PC-9 (cell line): ENCODE measurements at regions of chr13 and their contacts with region 1.

Region 1: DNA sequence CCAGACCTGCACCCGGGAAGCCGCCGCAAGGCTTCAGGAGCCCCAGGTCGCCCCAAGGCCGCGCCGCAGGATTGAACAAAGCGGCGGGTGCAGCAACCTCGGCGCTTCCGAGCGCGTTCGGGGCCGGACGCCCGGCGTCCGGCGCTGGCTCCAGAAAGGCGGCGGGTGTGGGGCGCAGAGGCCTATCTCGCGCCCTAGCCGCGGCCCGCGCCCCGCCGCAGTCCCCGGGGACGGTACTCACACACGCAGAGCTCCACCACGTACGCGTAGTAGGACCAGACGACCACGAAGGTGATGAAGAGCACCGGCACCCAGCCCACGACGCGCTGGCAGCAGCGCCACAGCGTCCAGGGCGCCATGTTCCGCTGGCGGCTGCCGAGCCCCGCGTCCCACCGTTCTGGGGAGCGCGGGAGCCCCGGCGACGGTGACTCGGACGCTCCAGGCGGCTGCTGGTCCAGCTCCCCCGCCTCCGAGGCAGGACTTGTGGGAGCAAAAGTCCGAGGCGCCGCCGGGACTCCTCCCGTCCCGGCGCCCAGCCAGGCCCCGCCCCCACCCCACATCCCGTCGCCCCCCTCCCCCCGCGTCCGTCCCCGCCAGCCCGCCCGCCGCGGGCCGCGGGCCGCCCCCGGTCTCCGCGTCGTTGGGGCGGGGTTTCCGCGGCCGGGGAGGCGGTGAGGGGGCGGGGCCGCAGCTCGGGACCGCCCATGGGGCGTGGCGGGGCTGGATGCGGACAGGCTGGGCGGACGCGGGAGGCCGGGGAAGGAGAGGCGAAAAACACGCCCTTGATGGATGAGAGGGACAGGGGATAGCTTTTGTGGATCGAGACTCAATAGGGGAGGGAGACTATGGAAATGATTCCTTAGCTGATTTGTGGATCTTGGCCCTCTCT is at the start of gene ZDHHC20:
- DNase-seq: peak; percentile 61 to 86
- H3K4me3 ChIP-seq: peak within 1 kb of the TSS; percentile 82
- H3K27ac ChIP-seq: peak within 1 kb of the TSS; percentile 60
- H3K4me1 ChIP-seq: peaks cover 23% of the 10 kb centered on the region
- H3K27me3 ChIP-seq: no peaks in the 10 kb centered on the region
- CTCF ChIP-seq: no peak
- total RNA-seq, gene ZDHHC20: 31.9 and 47.5 TPM in 2 replicates

Region 2: DNA sequence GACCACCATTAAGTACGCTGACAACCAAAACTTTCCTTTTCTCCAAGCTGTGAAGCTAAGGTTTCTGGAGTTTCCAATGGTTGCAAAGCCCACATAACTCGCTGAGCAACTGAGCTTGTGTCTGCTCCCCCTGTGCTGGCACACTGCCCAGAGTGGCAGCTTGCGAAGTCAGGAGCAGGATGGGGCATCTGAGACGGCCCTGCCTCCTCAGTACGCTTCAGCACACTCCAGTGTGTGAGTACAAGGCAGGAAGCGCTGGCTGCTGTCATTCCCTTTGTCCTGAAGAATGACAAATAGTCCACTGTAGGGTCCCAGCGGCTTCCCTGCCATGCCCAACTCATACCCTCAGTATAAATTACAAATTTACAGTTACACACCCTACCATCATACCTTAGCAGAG is 334.2 kb before region 1 on chr13:
- CTCF ChIA-PET with region 1: no interaction called
- POLR2A ChIA-PET with region 1: no interaction called
- intact Hi-C with region 1: no loop called
- DNase-seq: peak; percentile 78 to 79
- H3K4me3 ChIP-seq: no peak overlapping the region
- H3K27ac ChIP-seq: no peak overlapping the region
- H3K4me1 ChIP-seq: 0 out of 2 replicates have a peak, but pooled peaks cover 6% of the 10 kb centered on the region
- H3K27me3 ChIP-seq: no peaks in the 10 kb centered on the region
- CTCF ChIP-seq: no peak

Region 3: GRCh38 chr13:21383090-21383489 is 76.0 kb before region 1 on chr13:
- CTCF ChIA-PET with region 1: no interaction called
- POLR2A ChIA-PET with region 1: interaction called, 37 read pairs
- intact Hi-C with region 1: no loop called
- DNase-seq: no peak
- H3K4me3 ChIP-seq: no peak overlapping the region
- H3K27ac ChIP-seq: no peak overlapping the region
- H3K4me1 ChIP-seq: no peaks in the 10 kb centered on the region
- H3K27me3 ChIP-seq: no peaks in the 10 kb centered on the region
- CTCF ChIP-seq: no peak